Heart right ventricle (tissue), 16 donors: ENCODE measurements at regions of chr13 and their contacts with region 1.

Region 1: DNA sequence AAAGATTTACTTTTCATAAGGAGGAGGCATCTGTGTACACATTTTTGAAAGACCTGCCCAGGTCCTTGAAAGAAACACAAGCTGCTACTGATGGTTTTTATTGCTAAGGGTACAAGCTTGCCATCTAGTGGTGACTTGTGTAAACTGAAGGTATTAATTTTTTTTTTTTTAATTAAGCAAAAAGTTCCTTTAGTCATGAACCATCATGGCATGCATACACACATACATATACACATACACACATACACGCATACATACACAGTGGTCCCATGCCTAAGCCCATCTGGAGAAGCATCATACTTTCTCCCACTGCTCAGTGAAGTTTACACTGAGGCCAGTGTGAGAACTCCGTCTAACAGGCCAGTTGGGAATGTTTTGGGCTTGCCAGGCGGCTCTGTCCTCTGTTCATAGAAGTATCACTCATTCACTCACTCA is 312.5 kb downstream of the DCLK1 start:
- DNase-seq: no peak
- ATAC-seq: peak in 6 of 8 donors; percentile 33 to 64 (median 38)
- H3K4me3 ChIP-seq: no peak overlapping the region
- H3K27ac ChIP-seq: no peak overlapping the region
- H3K4me1 ChIP-seq: peaks cover 0 to 7% (median 0%) of the 10 kb centered on the region in 9 donors
- H3K27me3 ChIP-seq: no peaks in the 10 kb centered on the region
- CTCF ChIP-seq: peak; percentile 62 to 81 (median 74)

Region 2: GRCh38 chr13:35210261-35210660 is 608.4 kb before region 1 on chr13:
- intact Hi-C with region 1: loop called in 1 of 10 experiments (anchors 10 kb)
- DNase-seq: no peak
- ATAC-seq: no peak
- H3K4me3 ChIP-seq: no peak overlapping the region
- H3K27ac ChIP-seq: no peak overlapping the region
- H3K4me1 ChIP-seq: peaks cover 0 to 7% (median 0%) of the 10 kb centered on the region in 9 donors
- H3K27me3 ChIP-seq: no peaks in the 10 kb centered on the region
- CTCF ChIP-seq: peak in 5 of 9 donors; percentile 8 to 31 (median 24)

Region 3: GRCh38 chr13:35947315-35947714 is 128.7 kb after region 1 on chr13:
- intact Hi-C with region 1: loop called in 8 of 10 experiments (anchors 5 to 10 kb)
- DNase-seq: no peak
- ATAC-seq: no peak
- H3K4me3 ChIP-seq: no peak overlapping the region
- H3K27ac ChIP-seq: no peak overlapping the region
- H3K4me1 ChIP-seq: no peaks in the 10 kb centered on the region
- H3K27me3 ChIP-seq: no peaks in the 10 kb centered on the region
- CTCF ChIP-seq: no peak

Region 4: DNA sequence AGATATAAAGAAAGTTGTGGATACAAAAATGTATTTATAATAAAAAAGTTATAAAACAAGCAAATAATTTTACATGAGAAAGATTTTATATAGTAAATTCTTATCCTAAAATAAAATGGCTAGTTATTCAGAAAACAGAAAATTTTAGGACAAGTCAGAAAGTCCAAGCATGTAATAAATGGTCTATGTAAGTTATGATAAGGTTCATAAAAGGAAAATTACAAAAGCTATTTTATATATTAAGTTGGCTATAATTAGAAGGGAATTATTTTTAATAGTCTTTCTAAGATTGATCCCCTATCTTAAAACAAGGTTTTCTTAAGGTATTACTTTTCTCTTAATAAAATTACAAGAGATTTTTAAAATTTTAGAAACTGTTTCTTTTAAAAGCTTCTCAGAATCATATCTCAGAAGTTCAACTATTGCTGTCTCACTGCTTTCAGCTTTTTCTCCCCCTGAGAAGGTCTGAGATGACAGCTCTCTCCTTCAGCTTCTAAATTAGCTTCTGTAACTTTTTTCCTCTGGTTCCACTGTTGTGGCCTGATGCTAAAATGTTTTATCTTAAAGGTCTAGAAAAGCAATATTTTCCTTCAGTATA is 470.2 kb after region 1 on chr13:
- intact Hi-C with region 1: no loop called
- DNase-seq: no peak
- ATAC-seq: no peak
- H3K4me3 ChIP-seq: no peak overlapping the region
- H3K27ac ChIP-seq: no peak overlapping the region
- H3K4me1 ChIP-seq: no peaks in the 10 kb centered on the region
- H3K27me3 ChIP-seq: peaks cover 0 to 3% (median 0%) of the 10 kb centered on the region in 7 donors
- CTCF ChIP-seq: no peak